Pancreas (tissue), 10 donors: ENCODE measurements at regions of chr3 and their contacts with region 1.

Region 1: GRCh38 chr3:183766745-183767606 is 58.4 kb downstream of the MAP6D1 start:
- DNase-seq: peak in 5 of 6 donors; percentile 65 to 83 (median 67)
- ATAC-seq: peak; percentile 94 to 100 (median 98)
- H3K4me3 ChIP-seq: no peak overlapping the region
- H3K27ac ChIP-seq: no peak overlapping the region
- H3K4me1 ChIP-seq: no peaks in the 10 kb centered on the region
- H3K27me3 ChIP-seq: no peaks in the 10 kb centered on the region
- CTCF ChIP-seq: peak; percentile 54 to 81 (median 67)

Region 2: DNA sequence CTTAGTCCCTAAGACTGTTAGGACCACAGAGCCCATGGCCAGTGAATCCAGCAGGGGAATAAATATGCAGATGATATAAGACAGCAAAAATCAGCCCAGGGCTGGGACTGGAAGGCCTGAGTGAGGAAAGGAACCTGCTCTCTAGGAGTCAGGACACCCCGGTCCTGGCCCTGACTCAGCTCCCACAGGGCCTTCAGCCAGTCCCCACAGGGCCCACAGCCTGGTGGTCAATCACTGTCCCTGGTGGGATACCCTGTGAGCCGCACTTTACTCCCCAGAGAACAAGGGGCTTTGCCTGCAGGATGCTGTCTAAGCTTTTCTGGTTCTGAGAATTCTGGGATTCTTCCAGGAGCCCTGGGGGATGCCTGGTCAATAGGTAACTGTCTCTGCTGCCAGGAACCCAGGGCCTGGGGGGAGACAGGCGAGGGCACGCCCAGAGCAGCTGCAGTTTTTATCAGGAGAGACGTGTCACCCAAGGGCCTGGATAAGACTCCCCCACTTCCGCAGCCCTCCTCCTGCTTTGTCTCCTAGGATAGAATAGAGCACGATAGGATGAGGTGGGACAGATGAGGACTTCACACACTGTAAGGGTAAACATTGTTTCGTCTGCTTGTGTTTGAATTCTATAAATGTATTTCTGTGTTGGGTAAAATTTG is 289.0 kb before region 1 on chr3:
- intact Hi-C with region 1: loop called in 2 of 3 experiments (anchors 10 kb)
- DNase-seq: no peak
- ATAC-seq: no peak
- H3K4me3 ChIP-seq: no peak overlapping the region
- H3K27ac ChIP-seq: no peak overlapping the region
- H3K4me1 ChIP-seq: no peaks in the 10 kb centered on the region
- H3K27me3 ChIP-seq: no peaks in the 10 kb centered on the region
- CTCF ChIP-seq: no peak

Region 3: GRCh38 chr3:183489455-183490210 is 277.3 kb before region 1 on chr3:
- intact Hi-C with region 1: loop called in 1 of 3 experiments (anchors 10 kb)
- DNase-seq: no peak
- ATAC-seq: no peak
- H3K4me3 ChIP-seq: no peak overlapping the region
- H3K27ac ChIP-seq: no peak overlapping the region
- H3K4me1 ChIP-seq: no peaks in the 10 kb centered on the region
- H3K27me3 ChIP-seq: no peaks in the 10 kb centered on the region
- CTCF ChIP-seq: no peak